IMR-90 (cell line): ENCODE measurements at regions of chr20 and their contacts with region 1.

Region 1: DNA sequence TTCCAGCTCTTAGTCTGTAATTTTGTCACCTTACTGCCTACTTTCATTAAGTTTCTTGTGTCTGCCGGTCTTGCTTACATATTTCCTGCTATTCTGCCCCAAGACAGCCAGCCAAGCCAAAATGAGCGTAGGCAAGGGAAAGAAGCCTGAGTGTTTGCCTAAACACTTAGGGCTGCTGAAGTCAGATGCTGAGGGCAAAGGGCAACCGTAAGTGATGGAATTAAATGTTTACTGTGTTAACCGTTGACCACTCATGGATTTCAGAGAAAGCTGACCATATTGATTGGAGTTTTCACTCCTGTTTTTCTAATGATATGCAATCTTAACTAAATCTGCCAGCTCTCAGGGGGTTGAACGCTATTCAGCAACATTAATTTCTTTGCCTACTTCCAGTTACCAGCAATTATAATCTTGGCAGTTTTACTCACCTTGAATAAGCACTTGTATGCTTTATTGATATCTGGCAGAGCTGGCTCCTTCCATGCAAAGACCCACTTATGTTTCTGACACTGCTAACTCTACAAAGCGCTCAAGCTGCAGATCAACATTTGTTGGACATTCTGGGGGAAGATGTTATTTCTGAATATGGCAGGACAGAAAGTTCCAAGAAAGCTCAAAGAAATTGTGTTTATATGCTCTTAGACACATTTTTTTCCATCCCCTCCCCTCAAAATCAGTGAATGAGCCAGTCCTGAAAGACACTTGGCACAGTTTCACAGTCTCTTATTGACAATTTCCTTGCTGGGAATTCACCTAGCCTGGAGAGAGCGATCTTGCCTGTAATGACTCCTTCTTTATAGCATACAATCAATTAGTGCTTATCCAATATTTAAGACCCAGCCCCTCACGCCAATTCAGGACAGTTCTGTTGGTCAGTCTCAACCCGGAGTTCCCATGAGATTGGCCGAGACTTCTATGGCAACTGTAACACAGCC is 183.8 kb downstream of the PLCB1 start:
- DNase-seq: no peak
- ATAC-seq: no peak
- H3K4me3 ChIP-seq: no peak overlapping the region
- H3K27ac ChIP-seq: no peak overlapping the region
- H3K4me1 ChIP-seq: no peaks in the 10 kb centered on the region
- H3K27me3 ChIP-seq: no peaks in the 10 kb centered on the region
- CTCF ChIP-seq: no peak
- POLR2A ChIP-seq: no peak
- RAD21 ChIP-seq: no peak

Region 2: GRCh38 chr20:8372824-8373380 is 57.0 kb after region 1 on chr20:
- CTCF ChIA-PET with region 1: no interaction called
- POLR2A ChIA-PET with region 1: no interaction called
- dilution Hi-C with region 1: no loop called
- in situ Hi-C with region 1: no loop called
- intact Hi-C with region 1: loop called (anchors 1 kb)
- DNase-seq: no peak
- ATAC-seq: no peak
- H3K4me3 ChIP-seq: no peak overlapping the region
- H3K27ac ChIP-seq: no peak overlapping the region
- H3K4me1 ChIP-seq: no peaks in the 10 kb centered on the region
- H3K27me3 ChIP-seq: no peaks in the 10 kb centered on the region
- CTCF ChIP-seq: no peak
- POLR2A ChIP-seq: no peak
- RAD21 ChIP-seq: no peak

Region 3: DNA sequence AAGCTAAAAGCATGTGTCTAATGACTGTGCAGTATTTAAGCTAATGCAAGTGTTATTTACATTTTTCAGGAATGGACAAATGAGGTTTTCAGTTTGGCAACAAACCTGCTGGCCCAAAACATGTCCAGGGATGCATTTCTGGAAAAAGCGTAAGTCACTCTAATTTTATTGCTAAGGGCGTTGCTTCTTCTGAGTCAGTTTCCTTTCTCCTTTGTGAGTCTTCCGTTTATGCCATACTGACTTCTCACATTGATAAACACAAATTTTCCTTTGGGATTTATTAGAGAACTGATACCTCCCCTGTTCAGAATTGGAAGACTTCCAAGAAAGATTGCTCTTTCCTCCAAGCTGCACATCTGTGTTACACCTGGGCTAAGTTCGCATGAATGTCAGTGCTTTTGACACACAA is 330.1 kb after region 1 on chr20:
- CTCF ChIA-PET with region 1: no interaction called
- POLR2A ChIA-PET with region 1: no interaction called
- dilution Hi-C with region 1: no loop called
- in situ Hi-C with region 1: no loop called
- intact Hi-C with region 1: no loop called
- DNase-seq: peak; percentile 52
- ATAC-seq: peak; percentile 40
- H3K4me3 ChIP-seq: no peak overlapping the region
- H3K27ac ChIP-seq: peak overlapping the region; percentile 31; the same call in 1 of the 2 replicates
- H3K4me1 ChIP-seq: peaks cover 2% of the 10 kb centered on the region; the same call in 1 of the 2 replicates
- H3K27me3 ChIP-seq: no peaks in the 10 kb centered on the region
- CTCF ChIP-seq: no peak
- POLR2A ChIP-seq: no peak
- RAD21 ChIP-seq: no peak